ENCODE measurements at regions of chr21 and their contacts with region 1.

Region 1: GRCh38 chr21:26814374-26814773 is 30.8 kb downstream of the ADAMTS1 start:
- DNase-seq: no peak
- H3K4me3 ChIP-seq: no peak overlapping the region
- H3K27ac ChIP-seq: no peak overlapping the region
- H3K4me1 ChIP-seq: no peaks in the 10 kb centered on the region
- H3K27me3 ChIP-seq: no peaks in the 10 kb centered on the region
- CTCF ChIP-seq: no peak

Region 2: DNA sequence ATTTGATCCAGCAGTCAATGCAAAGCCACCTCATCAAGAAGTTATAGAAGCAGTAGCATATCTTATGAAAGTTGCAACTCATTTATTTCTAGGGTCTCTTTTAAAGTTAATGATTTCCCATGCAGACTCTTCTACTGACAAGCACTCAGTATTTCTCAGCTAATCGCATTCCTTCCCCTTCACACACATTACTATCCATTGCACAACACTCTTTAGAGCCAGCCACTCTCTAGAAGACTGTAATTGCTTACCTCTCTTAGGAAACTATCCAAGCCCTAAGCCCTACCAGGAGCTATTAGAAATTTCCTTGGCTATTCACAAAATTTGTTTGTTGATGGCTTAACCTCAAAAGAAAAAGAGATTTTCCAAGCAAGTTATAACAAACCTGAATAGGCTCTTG is 75.2 kb before region 1 on chr21:
- CTCF ChIA-PET with region 1: no interaction called
- dilution Hi-C with region 1: loop called (anchors 5 kb)
- in situ Hi-C with region 1: no loop called
- intact Hi-C with region 1: no loop called
- DNase-seq: no peak
- H3K4me3 ChIP-seq: no peak overlapping the region
- H3K27ac ChIP-seq: no peak overlapping the region
- H3K4me1 ChIP-seq: no peaks in the 10 kb centered on the region
- H3K27me3 ChIP-seq: no peaks in the 10 kb centered on the region
- CTCF ChIP-seq: no peak

Region 3: DNA sequence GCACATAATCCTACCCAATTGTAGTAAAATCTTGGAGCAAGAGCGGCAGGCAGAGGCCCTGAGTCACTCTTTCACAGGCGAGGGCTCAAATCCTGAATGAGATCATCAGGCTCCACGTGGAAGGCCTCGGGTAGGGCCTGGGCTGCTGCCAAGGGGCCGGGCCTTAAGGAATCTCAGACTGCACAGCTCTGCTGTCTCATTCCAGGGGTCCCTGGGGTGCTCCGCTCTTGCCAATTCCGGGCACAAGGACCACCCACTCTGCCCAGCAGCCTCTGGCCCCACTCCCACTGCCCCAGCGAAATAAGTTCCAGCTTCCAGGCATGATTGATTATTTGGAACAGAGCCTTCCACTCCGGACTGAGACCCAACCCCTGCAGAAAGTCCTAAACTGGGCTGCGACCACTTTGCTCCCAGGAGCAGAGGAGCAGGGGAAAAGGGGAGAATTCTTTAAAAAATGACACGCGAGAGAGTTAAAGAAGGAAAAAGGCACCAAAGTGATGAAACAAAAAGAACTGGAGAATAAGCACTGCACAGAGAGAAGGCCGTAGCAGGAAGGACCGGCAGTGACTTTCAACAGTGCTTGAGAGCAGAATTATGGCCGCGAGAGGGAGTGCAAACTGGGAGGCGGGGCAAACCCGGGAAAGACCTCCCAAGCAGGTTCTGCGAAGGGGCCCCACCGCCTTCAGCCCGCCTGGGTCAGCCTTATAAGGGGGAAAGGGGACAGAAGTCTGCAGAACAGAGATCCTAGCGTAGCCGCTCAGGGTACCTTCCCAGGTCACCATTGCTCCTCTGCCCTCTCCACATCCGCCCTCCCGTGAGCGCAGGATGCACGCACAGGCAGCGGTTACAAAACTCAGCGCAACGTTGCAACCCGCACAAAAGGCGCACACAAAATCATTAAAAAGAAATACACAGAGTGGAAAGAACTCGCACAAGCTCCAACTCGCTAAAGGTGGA is 28.9 kb after region 1 on chr21:
- CTCF ChIA-PET with region 1: interaction called, 4 read pairs
- dilution Hi-C with region 1: no loop called
- in situ Hi-C with region 1: no loop called
- intact Hi-C with region 1: loop called (anchors 2 kb)
- DNase-seq: peak; percentile 91
- H3K4me3 ChIP-seq: peak overlapping the region; percentile 70 to 85 (median 74)
- H3K27ac ChIP-seq: peak overlapping the region; percentile 80
- H3K4me1 ChIP-seq: peaks cover 27% of the 10 kb centered on the region
- H3K27me3 ChIP-seq: no peaks in the 10 kb centered on the region
- CTCF ChIP-seq: peak in 1 of 2 donors; percentile 29